Right cardiac atrium (tissue), 5 donors: ENCODE measurements at regions of chr18 and their contacts with region 1.

Region 1: DNA sequence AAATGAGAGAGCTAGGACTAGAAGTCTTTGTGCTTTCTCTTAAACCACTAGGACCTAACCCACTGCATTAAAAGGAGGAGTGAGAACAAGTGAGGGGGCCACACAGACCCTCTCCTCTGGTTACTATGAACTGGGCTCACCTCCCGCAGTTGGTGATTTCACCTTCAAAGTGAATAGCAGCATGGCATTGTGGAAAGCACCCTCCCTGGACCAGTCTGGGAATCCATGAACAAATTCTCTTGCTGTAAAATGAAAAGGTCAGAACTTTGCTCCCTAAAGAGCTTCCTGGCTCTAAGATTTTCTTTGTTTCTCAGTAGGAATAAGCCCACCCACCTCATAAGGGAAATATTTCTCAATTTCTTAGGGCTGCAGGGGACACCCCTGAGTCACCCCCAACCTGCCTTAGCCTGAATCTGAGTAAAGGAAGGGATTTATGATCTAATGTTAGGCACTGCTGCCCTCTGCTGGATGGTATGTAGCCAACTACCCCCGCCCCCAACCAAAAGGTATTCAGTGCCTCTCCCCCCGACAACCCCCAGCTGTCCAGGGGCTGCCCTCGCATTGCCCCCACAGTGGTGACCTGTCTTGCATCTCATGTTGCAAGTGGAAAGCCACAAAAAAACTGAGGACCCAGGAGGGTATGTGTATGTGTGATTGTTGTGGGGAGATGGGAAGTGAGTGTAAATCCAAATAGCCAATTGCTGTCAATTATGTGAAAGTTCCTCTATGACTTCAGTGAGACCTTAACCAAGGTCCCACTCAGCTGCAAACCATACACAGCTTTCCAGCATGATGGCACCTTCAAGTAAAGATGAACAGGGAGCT is 230.9 kb upstream of the SLC14A2 start:
- DNase-seq: peak; percentile 41 to 73 (median 64)
- ATAC-seq: peak; percentile 69 to 85
- H3K4me3 ChIP-seq: no peak overlapping the region
- H3K27ac ChIP-seq: no peak overlapping the region
- H3K4me1 ChIP-seq: no peaks in the 10 kb centered on the region
- H3K27me3 ChIP-seq: no peaks in the 10 kb centered on the region

Region 2: DNA sequence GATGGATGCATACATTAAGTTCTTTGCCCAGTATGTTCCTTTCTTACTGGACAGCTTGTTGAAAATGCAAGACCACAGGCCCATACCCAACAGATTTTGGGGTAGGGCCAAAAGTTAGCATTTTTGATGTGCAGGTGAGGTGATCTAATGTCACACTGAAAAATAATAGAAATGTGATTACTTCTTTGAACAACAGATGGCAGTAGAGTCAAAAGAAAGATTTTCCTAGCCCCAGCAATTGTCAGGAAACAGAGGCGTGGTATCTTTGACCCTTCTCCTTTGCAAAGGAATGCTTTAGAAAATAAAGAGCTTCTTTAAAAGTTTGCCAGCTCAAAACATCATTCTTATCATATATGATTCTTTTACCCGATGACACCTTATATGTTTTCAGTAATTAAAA is 1763.4 kb before region 1 on chr18:
- intact Hi-C with region 1: loop called in 1 of 4 experiments (anchors 5 kb)
- DNase-seq: peak in 1 of 3 donors; percentile 2
- ATAC-seq: peak; percentile 38 to 55
- H3K4me3 ChIP-seq: no peak overlapping the region
- H3K27ac ChIP-seq: no peak overlapping the region
- H3K4me1 ChIP-seq: no peaks in the 10 kb centered on the region
- H3K27me3 ChIP-seq: no peaks in the 10 kb centered on the region

Region 3: GRCh38 chr18:45275367-45276113 is 108.8 kb before region 1 on chr18:
- intact Hi-C with region 1: loop called in 1 of 4 experiments (anchors 10 kb)
- DNase-seq: no peak
- ATAC-seq: no peak
- H3K4me3 ChIP-seq: no peak overlapping the region
- H3K27ac ChIP-seq: no peak overlapping the region
- H3K4me1 ChIP-seq: no peaks in the 10 kb centered on the region
- H3K27me3 ChIP-seq: no peaks in the 10 kb centered on the region